Activated CD4-positive, alpha-beta T cell treated with anti-CD3 and anti-CD28 coated beads for 36 hours (primary cell): ENCODE measurements at regions of chr1 and their contacts with region 1.

Region 1: DNA sequence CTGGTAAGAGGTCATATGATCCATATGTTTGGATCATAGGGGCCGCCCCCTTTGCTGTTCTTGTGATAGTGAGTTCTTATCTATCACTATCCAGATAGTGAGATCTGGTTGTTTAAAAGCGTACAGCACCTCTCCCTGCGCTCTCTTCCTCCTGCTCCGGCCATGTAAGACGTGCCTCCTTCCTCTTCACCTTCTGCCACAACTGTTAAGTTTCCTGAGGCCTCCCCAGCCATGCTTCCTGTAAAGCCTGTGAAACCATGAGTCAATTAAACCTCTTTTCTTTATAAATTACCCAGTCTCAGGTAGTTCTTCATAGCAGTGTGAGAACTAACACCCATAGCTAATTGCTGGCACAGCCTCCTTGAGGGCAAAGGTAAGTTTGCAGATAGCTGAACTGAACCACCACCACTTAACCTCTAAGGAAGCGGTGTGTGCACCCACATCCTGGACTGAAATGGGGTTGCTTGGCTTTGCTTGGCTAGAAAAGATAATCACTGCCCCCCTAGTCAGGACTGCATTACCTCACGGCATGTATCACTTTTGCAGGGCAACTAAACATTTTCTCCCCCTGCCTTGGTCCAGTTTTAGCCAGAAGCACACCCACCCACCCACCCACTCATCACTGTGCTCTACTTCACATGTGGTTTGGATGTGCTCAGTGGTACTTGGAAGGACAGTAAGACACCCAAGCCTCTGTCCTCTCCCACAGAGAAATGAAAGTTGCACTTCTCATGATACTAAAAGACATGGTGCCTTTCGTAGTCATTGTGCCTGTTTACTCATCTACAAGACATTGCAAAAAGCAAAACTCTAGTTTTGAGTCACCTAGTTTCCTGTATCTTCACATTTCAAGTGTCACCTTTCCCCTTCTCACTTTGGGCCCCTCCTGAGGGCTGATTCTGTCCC is 23.1 kb upstream of the PTAFR start:
- DNase-seq: peak; percentile 84
- ATAC-seq: peak; percentile 92
- H3K4me3 Mint-ChIP-seq: peak overlapping the region; percentile 37
- H3K27ac Mint-ChIP-seq: peak overlapping the region; percentile 89
- H3K4me1 Mint-ChIP-seq: peaks cover 47% of the 10 kb centered on the region
- H3K27me3 Mint-ChIP-seq: no peaks in the 10 kb centered on the region

Region 2: DNA sequence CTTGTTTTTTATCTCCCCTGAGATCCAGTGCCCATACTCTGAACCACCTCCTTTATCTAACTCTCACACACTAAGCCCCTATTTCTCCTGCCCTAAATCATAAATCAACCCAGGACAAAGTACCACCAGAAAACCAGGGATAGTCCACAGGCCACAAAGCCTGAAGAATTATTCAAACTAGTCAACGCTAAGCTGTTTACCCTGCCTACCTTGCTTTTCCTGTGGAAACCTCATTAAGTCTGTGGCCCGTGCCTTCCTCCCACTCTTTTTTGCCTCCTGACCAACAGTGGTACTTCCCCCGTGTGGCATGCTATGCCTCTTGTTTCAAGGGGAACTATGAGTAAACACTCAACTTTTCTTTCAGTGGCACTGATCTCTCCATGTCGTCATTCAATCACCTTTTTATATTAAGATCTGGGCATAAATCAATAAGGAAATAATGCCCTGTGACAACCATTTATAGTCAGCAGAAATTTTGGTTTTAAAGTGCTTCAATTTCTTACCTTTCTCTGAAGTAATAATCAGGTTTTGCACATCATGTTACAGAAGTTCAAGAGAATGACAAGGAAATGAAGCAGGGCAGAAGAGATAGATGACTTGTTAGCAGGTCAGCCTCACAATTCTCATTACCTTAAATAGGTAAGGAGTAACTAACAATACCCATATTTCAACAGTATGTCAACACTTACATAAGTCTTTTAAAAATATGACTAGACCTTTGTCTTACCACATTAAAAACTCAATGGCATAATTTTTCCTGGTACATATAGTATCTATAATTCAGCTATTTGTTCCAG is 143.3 kb before region 1 on chr1:
- CTCF ChIA-PET with region 1: interaction called, 3 read pairs
- POLR2A ChIA-PET with region 1: no interaction called
- intact Hi-C with region 1: loop called in 1 of 2 experiments (anchors 1 kb)
- DNase-seq: peak; percentile 85
- ATAC-seq: peak; percentile 85
- H3K4me3 Mint-ChIP-seq: peak overlapping the region; percentile 1
- H3K27ac Mint-ChIP-seq: peak overlapping the region; percentile 83
- H3K4me1 Mint-ChIP-seq: peaks cover 47% of the 10 kb centered on the region
- H3K27me3 Mint-ChIP-seq: no peaks in the 10 kb centered on the region